CD4-positive, alpha-beta T cell (primary cell): ENCODE measurements at regions of chr5 and their contacts with region 1.

Region 1: GRCh38 chr5:96997265-96997859 is 61.5 kb downstream of the LNPEP start:
- DNase-seq: peak in 4 of 14 experiments; percentile 37 to 65 (median 52)
- ATAC-seq: peak; percentile 76
- H3K4me3 ChIP-seq: no peak overlapping the region
- H3K4me3 Mint-ChIP-seq: no peak overlapping the region
- H3K27ac ChIP-seq: no peak overlapping the region
- H3K27ac Mint-ChIP-seq: peak overlapping the region; percentile 59
- H3K4me1 ChIP-seq: no peaks in the 10 kb centered on the region
- H3K4me1 Mint-ChIP-seq: peaks cover 39% of the 10 kb centered on the region
- H3K27me3 ChIP-seq: no peaks in the 10 kb centered on the region
- H3K27me3 Mint-ChIP-seq: no peaks in the 10 kb centered on the region
- CTCF ChIP-seq: peak; percentile 57

Region 2: DNA sequence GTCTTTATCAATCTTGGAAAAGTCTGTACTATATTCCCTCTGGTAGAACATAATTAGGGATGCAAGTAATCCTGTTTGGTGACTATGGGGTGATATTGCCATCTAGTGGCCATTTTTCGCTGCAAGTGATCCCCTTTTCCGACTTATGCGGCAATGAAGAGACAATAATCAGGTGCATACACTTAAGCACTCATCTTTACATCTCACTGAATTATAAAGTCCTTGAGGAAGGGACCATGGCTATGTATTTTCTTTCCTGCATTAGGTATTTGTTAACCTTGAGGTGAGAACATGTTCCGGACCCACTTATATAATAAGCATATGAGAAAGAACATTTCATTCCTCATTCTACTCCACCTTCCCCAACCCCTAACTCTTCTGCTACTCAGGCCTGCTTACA is 164.7 kb after region 1 on chr5:
- CTCF ChIA-PET with region 1: no interaction called
- POLR2A ChIA-PET with region 1: no interaction called
- intact Hi-C with region 1: loop called (anchors 5 kb)
- DNase-seq: peak in 12 of 14 experiments; percentile 16 to 82 (median 34)
- ATAC-seq: peak; percentile 49
- H3K4me3 ChIP-seq: no peak overlapping the region
- H3K4me3 Mint-ChIP-seq: no peak overlapping the region
- H3K27ac ChIP-seq: no peak overlapping the region
- H3K27ac Mint-ChIP-seq: no peak overlapping the region
- H3K4me1 ChIP-seq: no peaks in the 10 kb centered on the region
- H3K4me1 Mint-ChIP-seq: peaks cover 14% of the 10 kb centered on the region
- H3K27me3 ChIP-seq: no peaks in the 10 kb centered on the region
- H3K27me3 Mint-ChIP-seq: no peaks in the 10 kb centered on the region
- CTCF ChIP-seq: peak; percentile 98